Activated CD8-positive, alpha-beta T cell treated with anti-CD3 and anti-CD28 coated beads for 36 hours (primary cell): ENCODE measurements at regions of chr3 and their contacts with region 1.

Region 1: DNA sequence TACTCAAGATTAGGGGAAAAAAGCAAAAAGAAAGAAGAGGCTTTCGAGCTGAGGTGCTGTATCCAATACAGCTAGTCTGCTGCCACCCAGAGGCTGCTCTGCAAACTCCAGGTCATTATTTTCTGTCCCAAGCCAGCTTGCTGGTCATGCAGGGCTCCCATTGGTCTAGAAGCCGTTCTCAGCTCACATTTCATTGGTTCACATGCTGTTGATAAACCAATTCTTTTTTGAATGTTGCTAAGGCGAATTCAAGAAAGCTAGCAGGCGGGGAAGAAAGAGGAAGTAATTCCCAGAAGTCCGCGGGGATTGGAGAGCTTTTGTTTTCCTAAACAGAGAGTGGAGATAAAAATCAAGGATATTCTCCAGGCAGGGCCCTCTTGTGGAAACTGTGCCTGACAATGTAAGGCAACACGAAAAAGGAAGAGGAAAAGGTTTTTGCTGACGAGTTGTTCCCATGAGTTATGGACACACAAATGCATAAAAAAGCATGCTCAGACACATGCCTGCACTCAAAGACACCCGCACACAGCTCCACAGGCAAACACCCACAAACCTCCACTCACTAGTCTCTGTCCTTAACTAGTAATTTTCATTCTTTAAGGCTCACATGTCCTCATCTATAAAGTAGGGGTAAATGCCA is 33.4 kb downstream of the FSTL1 start:
- DNase-seq: peak; percentile 95
- ATAC-seq: peak; percentile 99
- H3K4me3 Mint-ChIP-seq: peak overlapping the region; percentile 81
- H3K27ac Mint-ChIP-seq: peak overlapping the region; percentile 78
- H3K4me1 Mint-ChIP-seq: peaks cover 6% of the 10 kb centered on the region
- H3K27me3 Mint-ChIP-seq: no peaks in the 10 kb centered on the region
- CTCF ChIP-seq: peak; percentile 79

Region 2: DNA sequence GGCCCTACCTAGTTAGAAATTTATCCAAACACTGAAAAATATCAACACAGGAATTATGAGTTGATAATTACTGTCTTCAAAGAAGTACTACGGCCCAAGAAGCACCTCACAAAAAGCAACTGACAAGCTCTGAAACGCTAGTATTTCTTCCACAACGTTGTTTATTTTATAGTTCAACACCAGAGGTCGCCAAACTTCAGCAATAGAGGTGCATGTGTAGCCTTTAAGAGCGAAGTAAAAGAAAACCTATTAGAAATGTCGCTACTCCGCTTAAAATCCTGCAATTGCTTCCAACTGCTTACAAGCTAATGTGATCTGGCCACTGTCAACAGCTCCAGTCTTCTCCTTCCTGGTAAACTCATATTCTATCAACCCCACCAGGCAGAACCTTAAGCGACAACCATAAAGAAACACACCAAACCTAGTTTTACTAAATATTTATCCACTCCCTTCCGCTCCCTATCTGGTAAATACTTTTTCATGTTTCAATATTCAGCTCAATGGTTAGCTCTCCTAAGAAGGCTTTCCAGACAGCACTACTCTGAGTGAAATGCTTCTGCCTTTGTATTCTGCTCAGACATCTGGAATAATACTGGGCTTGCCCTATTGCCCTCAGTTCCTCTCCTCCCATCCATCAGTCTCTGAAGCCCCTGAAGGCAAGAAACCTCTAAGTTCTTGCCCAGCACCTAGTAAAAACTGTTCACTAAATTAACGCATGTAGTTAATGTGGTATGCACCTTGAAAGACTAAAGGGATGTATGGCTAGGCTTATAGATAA is 525.3 kb before region 1 on chr3:
- CTCF ChIA-PET with region 1: interaction called, 14 read pairs
- POLR2A ChIA-PET with region 1: no interaction called
- intact Hi-C with region 1: no loop called
- DNase-seq: peak; percentile 45
- ATAC-seq: peak; percentile 80
- H3K4me3 Mint-ChIP-seq: no peak overlapping the region
- H3K27ac Mint-ChIP-seq: no peak overlapping the region
- H3K4me1 Mint-ChIP-seq: peaks cover 20% of the 10 kb centered on the region
- H3K27me3 Mint-ChIP-seq: no peaks in the 10 kb centered on the region
- CTCF ChIP-seq: peak; percentile 81

Region 3: GRCh38 chr3:120245386-120245785 is 172.0 kb before region 1 on chr3:
- CTCF ChIA-PET with region 1: interaction called, 131 read pairs
- POLR2A ChIA-PET with region 1: no interaction called
- intact Hi-C with region 1: loop called (anchors 1 kb)
- DNase-seq: no peak
- ATAC-seq: no peak
- H3K4me3 Mint-ChIP-seq: no peak overlapping the region
- H3K27ac Mint-ChIP-seq: no peak overlapping the region
- H3K4me1 Mint-ChIP-seq: no peaks in the 10 kb centered on the region
- H3K27me3 Mint-ChIP-seq: peaks cover 12% of the 10 kb centered on the region
- CTCF ChIP-seq: no peak

Region 4: DNA sequence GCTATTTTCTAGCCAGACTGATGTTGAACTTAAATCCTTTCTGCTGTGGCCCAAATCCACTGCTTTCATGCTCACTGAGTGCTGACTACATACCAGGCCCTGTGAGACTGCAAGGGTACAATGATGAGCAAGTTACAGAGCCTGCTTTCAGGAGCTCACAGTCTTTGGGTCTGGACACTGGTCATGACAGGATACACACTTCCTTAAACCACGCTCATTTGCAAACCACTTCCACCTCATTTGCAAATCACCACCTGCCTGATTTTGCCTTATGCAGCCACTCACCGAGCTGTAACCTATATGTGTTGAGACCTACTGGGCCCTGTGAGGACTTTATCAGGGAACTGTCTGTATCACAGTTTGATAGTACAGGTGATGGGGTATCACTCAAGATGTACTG is 18.0 kb before region 1 on chr3:
- CTCF ChIA-PET with region 1: interaction called, 26 read pairs
- POLR2A ChIA-PET with region 1: no interaction called
- intact Hi-C with region 1: no loop called
- DNase-seq: no peak
- ATAC-seq: no peak
- H3K4me3 Mint-ChIP-seq: no peak overlapping the region
- H3K27ac Mint-ChIP-seq: no peak overlapping the region
- H3K4me1 Mint-ChIP-seq: no peaks in the 10 kb centered on the region
- H3K27me3 Mint-ChIP-seq: peaks cover 1% of the 10 kb centered on the region
- CTCF ChIP-seq: no peak

Region 5: GRCh38 chr3:120442975-120443517 is 25.7 kb after region 1 on chr3:
- CTCF ChIA-PET with region 1: interaction called, 16 read pairs
- POLR2A ChIA-PET with region 1: no interaction called
- intact Hi-C with region 1: no loop called
- DNase-seq: no peak
- ATAC-seq: no peak
- H3K4me3 Mint-ChIP-seq: no peak overlapping the region
- H3K27ac Mint-ChIP-seq: no peak overlapping the region
- H3K4me1 Mint-ChIP-seq: no peaks in the 10 kb centered on the region
- H3K27me3 Mint-ChIP-seq: peaks cover 12% of the 10 kb centered on the region
- CTCF ChIP-seq: no peak

Region 6: DNA sequence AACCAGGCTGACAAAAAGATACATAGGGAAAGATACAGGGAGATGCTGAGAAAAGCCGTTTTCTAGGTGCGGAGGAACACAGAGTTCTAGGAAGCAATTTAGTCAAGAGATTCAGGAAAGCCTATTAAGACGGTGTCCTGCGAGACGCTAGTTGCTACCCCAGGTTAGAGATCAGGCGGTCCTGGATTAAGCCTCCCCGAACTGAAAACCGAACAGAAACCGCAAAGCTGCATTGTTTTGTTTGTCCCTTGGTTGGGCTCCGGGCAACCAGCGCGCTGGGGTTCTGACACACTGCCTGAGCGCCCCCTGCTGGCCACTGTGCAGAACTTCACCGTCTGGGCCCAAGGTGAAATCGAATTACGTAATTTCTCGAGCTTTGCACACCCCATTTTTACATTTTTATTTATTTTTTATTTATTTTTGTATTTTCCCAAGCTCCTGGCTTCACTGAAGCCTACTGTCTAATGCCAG is 141.4 kb after region 1 on chr3:
- CTCF ChIA-PET with region 1: interaction called, 61 read pairs
- POLR2A ChIA-PET with region 1: no interaction called
- intact Hi-C with region 1: loop called (anchors 5 kb)
- DNase-seq: peak; percentile 88
- ATAC-seq: peak; percentile 84
- H3K4me3 Mint-ChIP-seq: peak overlapping the region; percentile 73
- H3K27ac Mint-ChIP-seq: peak overlapping the region; percentile 39
- H3K4me1 Mint-ChIP-seq: peaks cover 15% of the 10 kb centered on the region
- H3K27me3 Mint-ChIP-seq: peaks cover 12% of the 10 kb centered on the region
- CTCF ChIP-seq: peak; percentile 94